ENCODE measurements at regions of chr19 and their contacts with region 1.

Region 1: GRCh38 chr19:39671738-39672363 is 16.1 kb downstream of the LGALS16 start:
- DNase-seq: peak; percentile 64
- ATAC-seq: peak; percentile 67
- H3K4me3 Mint-ChIP-seq: no peak overlapping the region
- H3K27ac Mint-ChIP-seq: peak overlapping the region; percentile 45
- H3K4me1 Mint-ChIP-seq: peaks cover 27% of the 10 kb centered on the region
- H3K27me3 Mint-ChIP-seq: peaks cover 8% of the 10 kb centered on the region

Region 2: DNA sequence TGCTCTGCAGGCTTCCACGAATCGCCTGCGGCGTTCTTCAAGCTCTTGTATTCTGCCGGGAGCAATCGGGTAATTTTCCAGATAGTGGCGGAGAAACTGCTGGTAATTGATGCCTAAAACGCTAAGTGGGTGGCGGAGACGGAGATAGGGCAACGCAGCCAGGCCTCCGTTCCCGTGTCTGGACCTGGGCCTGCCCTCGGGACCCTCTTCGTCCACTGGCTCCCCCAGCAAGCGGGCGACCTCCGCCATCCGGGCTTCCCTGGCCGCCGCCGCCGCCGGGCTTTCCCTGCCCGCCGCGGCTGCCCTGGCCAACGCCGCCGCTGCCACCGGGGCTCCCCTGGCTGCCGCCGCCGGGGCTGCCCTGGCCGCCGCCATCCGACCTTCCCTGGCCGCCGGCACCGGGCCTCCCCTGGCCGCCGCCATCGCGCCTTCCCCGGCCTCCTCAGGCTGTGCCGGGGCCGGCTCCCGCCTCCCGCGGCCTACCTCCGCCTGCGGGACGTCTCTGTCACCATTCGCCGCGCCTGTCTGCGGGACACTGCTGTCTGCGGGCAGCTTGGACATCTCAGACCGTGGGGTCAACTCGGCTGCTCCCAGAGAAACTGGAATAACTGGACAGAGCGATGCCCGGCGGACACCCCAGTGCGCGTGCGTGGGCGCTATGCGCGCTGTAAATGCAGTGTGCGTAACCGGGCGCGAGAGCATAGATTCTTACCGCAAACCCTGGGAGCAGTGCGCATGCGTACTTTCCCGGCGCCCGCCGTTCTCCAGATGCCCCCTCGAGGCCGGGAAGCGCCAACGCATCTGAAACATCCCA is 132.1 kb before region 1 on chr19 and contains the start of gene EID2:
- CTCF ChIA-PET with region 1: interaction called, 25 read pairs
- POLR2A ChIA-PET with region 1: no interaction called
- intact Hi-C with region 1: loop called in 1 of 2 experiments (anchors 5 kb)
- DNase-seq: peak; percentile 98
- ATAC-seq: peak; percentile 80
- H3K4me3 Mint-ChIP-seq: peak within 1 kb of the TSS; percentile 84
- H3K27ac Mint-ChIP-seq: peak within 1 kb of the TSS; percentile 94
- H3K4me1 Mint-ChIP-seq: peaks cover 53% of the 10 kb centered on the region
- H3K27me3 Mint-ChIP-seq: no peaks in the 10 kb centered on the region
- total RNA-seq, gene EID2: 9.0 to 10.7 TPM

Region 3: GRCh38 chr19:39546599-39546998 is 125.3 kb before region 1 on chr19:
- CTCF ChIA-PET with region 1: interaction called, 88 read pairs
- POLR2A ChIA-PET with region 1: no interaction called
- intact Hi-C with region 1: loop called (anchors 1 kb)
- DNase-seq: peak; percentile 26
- ATAC-seq: no peak
- H3K4me3 Mint-ChIP-seq: no peak overlapping the region
- H3K27ac Mint-ChIP-seq: no peak overlapping the region
- H3K4me1 Mint-ChIP-seq: peaks cover 41% of the 10 kb centered on the region
- H3K27me3 Mint-ChIP-seq: no peaks in the 10 kb centered on the region

Region 4: DNA sequence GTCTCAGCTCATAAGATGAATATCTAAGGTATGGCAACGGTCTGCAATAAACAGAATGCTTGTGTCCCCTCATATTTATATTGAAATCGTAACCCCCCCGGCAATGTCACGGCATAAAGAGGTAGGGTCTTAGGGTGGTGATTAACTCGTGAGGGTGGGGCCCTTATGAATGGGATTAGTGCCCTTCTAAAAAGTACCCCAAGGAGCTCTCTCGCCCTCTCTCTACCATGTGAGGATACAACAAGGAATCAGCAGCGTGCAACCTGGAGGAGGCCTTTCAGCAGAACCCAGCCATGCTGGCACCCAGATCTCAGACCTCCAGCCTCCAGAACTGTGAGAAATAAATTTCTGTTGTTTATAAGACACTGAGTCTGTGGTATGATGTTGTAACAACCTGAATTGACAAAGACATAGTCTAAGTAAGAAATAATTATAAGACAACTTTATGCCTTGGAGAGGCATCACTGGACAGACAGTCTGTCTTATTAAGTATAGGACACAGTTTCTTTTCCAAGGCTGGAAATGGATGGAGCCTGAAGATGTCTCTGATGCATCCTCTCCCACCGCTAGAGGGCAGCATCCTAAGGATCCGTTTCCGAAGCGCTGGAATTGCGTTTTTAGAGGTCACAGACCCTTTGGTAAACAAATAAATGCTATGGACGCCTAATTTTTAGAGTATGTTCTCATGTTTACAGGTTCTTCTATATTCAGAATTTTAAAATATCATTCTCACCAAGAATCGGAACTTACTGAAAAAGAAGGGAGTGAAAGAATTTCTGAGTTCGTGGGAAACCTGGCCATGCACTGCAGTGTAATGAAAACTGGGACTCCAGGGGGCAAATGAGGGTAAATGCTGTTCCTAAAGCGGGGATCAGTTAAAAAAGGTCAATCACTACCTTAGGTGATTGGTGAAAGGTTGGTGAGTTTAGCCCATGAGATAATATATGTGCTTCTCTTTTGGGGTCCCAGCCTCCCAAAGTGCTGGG is 93.5 kb after region 1 on chr19:
- CTCF ChIA-PET with region 1: interaction called, 7 read pairs
- POLR2A ChIA-PET with region 1: no interaction called
- intact Hi-C with region 1: loop called (anchors 1 to 5 kb)
- DNase-seq: peak; percentile 63
- ATAC-seq: no peak
- H3K4me3 Mint-ChIP-seq: no peak overlapping the region
- H3K27ac Mint-ChIP-seq: no peak overlapping the region
- H3K4me1 Mint-ChIP-seq: no peaks in the 10 kb centered on the region
- H3K27me3 Mint-ChIP-seq: peaks cover 21% of the 10 kb centered on the region

Measured in activated CD4-positive, alpha-beta T cell treated with anti-CD3 and anti-CD28 coated beads for 36 hours (primary cell).